Activated CD4-positive, alpha-beta memory T cell treated with anti-CD3 and anti-CD28 coated beads, Interleukin-2, amount 10 ng/mL, durations not matched to agents 7 days and 5 days (primary cell): ENCODE measurements at regions of chr19 and their contacts with region 1.

Region 1: GRCh38 chr19:35462476-35462953 is 14.5 kb downstream of the FFAR2 start:
- DNase-seq: peak; percentile 77
- H3K4me3 Mint-ChIP-seq: peak overlapping the region; percentile 63
- H3K27ac Mint-ChIP-seq: peak overlapping the region; percentile 95
- H3K4me1 Mint-ChIP-seq: peaks cover 49% of the 10 kb centered on the region
- H3K27me3 Mint-ChIP-seq: peaks cover 9% of the 10 kb centered on the region

Region 2: DNA sequence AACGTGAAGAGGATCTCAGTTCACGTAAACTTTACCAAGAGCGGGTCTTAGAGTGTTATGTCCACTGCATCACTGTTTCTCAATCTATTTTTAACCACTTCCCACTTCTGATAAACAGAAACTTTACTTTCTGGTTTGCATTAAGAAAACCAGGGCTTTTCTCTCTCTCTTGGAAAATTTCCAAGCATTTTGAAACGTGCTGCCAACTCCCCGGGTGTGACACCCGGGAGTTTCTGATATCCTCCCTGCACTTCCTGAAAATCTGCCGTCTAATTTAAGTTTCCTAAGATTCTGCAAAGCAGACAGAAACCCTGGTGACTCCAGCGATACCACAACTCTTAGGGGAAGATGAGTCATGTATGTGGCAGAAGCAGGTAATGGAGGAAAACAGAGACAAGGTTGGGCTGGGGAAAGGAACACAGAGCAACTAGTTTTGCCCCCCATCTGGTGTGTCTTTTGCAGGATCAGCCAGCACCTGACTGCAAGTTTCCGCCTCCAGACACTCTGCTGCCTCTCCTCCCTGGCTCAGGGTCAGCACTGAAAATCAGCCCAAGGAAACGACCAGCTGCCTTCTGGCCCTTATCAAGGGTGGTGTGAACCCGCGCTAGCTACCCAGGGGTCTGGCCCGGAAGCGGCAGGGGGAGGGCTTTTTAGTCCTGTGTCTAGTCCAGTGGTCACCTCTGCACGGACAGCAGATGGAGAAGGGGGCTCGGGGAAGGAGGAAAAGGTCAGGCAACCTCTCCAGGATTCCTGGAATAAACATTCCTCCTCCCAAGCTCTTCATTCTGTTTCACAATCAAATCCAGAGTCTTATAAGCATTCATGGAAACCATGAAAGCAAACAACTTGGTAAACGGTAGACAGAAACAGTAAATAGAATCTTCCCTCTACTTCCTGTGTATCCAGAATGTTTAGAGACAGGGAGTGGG is 25.8 kb before region 1 on chr19:
- CTCF ChIA-PET with region 1: no interaction called
- POLR2A ChIA-PET with region 1: interaction called, 10 read pairs
- DNase-seq: peak; percentile 42
- H3K4me3 Mint-ChIP-seq: peak overlapping the region; percentile 37
- H3K27ac Mint-ChIP-seq: peak overlapping the region; percentile 68
- H3K4me1 Mint-ChIP-seq: peaks cover 23% of the 10 kb centered on the region
- H3K27me3 Mint-ChIP-seq: peaks cover 39% of the 10 kb centered on the region

Region 3: GRCh38 chr19:35451338-35452096 is 11.0 kb before region 1 on chr19:
- CTCF ChIA-PET with region 1: interaction called, 8 read pairs
- POLR2A ChIA-PET with region 1: interaction called, 35 read pairs
- DNase-seq: peak; percentile 47
- H3K4me3 Mint-ChIP-seq: no peak overlapping the region
- H3K27ac Mint-ChIP-seq: peak overlapping the region; percentile 36
- H3K4me1 Mint-ChIP-seq: peaks cover 64% of the 10 kb centered on the region
- H3K27me3 Mint-ChIP-seq: peaks cover 43% of the 10 kb centered on the region